ENCODE measurements at regions of chr11 and their contacts with region 1.

Region 1: GRCh38 chr11:59542142-59542810 is 30.9 kb downstream of the OR4D9 start:
- DNase-seq: no peak
- ATAC-seq: no peak

Region 2: DNA sequence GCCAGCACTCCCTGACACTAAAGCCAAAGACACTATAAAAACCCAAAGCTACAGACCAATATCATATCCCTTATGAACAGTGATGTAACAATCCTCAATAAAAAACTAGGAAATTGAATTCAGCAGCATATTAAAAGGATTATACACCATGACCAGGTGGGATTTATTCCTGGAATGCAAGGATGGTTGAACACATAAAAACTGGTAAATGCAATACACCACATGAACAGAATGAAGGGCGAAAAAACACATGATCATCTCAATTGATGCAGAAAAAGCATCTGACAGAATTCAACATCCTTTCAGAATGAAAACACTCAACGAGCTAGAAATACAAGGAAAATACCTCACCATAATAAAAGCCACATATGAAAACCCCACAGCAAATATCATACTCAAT is 42.0 kb after region 1 on chr11:
- intact Hi-C with region 1: no loop called
- DNase-seq: no peak
- ATAC-seq: no peak

Region 3: GRCh38 chr11:59680287-59681154 is 138.2 kb after region 1 on chr11:
- intact Hi-C with region 1: loop called (anchors 2 kb)
- DNase-seq: peak; percentile 61
- ATAC-seq: peak; percentile 91